ENCODE measurements at regions of chr11 and their contacts with region 1.

Region 1: DNA sequence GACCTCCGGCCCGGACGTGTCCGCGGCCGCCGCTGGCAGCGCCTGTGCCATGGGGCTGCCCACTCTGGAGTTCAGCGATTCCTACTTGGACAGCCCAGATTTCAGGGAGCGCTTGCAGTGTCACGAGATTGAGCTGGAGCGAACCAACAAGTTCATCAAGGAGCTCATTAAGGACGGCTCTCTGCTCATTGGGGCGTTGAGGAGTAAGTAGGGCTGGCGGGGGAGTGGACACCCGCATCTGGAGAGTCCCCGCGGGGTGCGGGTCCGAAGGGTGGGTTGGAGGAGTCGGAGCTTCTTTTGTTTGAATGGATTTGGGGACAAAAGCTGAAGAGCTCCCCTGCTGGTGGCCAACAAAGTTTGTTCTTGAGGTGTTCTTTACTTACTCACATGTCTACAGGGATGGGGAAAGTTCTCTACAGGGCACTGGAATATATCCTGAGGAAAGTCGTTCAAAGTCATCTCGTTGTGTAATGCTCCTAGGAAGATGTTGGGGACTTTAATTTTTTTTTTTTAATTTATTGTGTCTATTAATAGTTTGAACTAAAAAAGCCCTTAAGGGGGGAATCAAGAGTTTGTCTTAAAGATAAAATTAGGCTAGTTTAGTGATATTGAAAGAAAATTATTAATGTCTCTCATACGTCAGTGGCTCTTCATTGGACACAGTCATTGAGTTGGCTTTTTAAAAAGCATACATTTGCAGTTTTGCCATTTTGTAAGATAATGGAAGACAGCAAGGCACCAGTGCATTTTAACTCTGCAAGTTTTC is 725 bp downstream of the ARHGAP42 start:
- DNase-seq: peak; percentile 81
- ATAC-seq: peak; percentile 64
- H3K4me3 ChIP-seq: peak overlapping the region; percentile 87
- H3K27ac ChIP-seq: peak overlapping the region; percentile 89
- H3K4me1 ChIP-seq: peaks cover 64% of the 10 kb centered on the region
- H3K27me3 ChIP-seq: no peaks in the 10 kb centered on the region
- CTCF ChIP-seq: peak; percentile 77

Region 2: GRCh38 chr11:100367892-100368291 is 319.9 kb before region 1 on chr11:
- CTCF ChIA-PET with region 1: no interaction called
- POLR2A ChIA-PET with region 1: no interaction called
- intact Hi-C with region 1: no loop called
- DNase-seq: no peak
- ATAC-seq: no peak
- H3K4me3 ChIP-seq: no peak overlapping the region
- H3K27ac ChIP-seq: no peak overlapping the region
- H3K4me1 ChIP-seq: no peaks in the 10 kb centered on the region
- H3K27me3 ChIP-seq: peaks cover 11% of the 10 kb centered on the region; the same call in 1 of the 2 replicates
- CTCF ChIP-seq: no peak

Region 3: GRCh38 chr11:100756559-100756958 is 68.7 kb after region 1 on chr11:
- CTCF ChIA-PET with region 1: no interaction called
- POLR2A ChIA-PET with region 1: interaction called, 26 read pairs
- intact Hi-C with region 1: loop called (anchors 5 kb)
- DNase-seq: no peak
- ATAC-seq: no peak
- H3K4me3 ChIP-seq: no peak overlapping the region
- H3K27ac ChIP-seq: no peak overlapping the region
- H3K4me1 ChIP-seq: peaks cover 12% of the 10 kb centered on the region
- H3K27me3 ChIP-seq: no peaks in the 10 kb centered on the region
- CTCF ChIP-seq: no peak